ENCODE measurements at regions of chr3 and their contacts with region 1.

Region 1: DNA sequence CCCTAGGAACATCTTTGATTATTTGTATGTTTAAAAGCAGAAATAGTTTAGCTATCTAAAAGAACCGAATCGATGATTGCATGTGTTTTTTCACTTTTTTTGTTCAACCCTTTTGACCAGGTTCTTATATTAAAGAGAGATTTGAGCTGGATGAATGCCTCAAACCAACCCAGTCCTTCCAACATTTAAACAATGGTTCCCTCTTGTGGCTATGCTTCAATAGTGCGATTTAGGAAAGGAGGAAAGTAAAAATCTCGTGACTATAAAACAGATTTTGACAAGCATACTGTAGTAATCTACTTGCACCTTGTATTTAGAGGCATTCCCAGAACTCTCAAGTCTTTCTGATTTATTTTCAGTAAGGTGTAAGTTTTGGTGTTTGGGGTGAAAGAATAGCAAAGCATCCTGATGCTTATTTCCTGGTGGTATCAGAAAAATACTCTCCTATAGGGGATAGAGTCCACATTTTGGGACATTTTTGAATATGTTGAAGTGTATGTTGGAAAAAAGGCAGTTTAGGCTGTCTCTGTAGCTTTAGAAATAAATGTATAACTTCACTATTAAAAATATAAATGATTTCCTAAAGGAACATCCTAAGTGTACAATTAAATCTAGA is 159.6 kb upstream of the KCNH8 start:
- DNase-seq: no peak
- ATAC-seq: peak; percentile 60; the same call in 1 of the 2 replicates
- H3K4me3 ChIP-seq: no peak overlapping the region
- H3K27ac ChIP-seq: no peak overlapping the region
- H3K4me1 ChIP-seq: no peaks in the 10 kb centered on the region
- H3K27me3 ChIP-seq: no peaks in the 10 kb centered on the region; the same call in 1 of the 2 replicates
- CTCF ChIP-seq: peak; percentile 55; the same call in 1 of the 2 replicates

Region 2: DNA sequence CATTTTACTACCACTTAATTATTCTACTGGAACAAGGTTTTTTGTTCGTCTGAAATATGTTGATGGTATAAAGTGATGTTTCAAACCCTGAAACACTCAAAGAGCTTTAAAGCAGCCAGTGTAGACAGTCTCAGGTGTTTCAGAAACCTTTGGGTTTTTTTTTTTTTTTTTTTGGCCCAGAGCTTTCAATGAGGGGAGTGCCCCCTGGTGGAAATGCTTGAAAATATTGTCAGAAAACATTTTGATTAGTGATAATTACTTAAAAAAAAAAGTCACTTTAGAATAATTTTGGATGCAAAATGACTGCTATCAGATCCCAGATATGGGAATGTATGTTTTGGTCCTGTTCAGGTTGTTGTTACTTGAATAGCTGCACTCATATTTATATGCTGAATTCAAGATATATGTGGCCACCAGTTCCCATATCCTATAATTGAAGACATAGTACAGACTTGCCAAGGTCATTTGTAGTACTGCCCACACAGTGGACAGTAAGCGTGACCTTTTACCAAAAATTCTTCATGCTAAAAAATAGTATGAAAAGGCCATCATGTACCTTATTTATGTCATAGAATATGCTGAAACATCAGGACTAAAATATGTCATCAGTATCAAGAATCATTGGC is 599.5 kb before region 1 on chr3:
- CTCF ChIA-PET with region 1: no interaction called
- POLR2A ChIA-PET with region 1: no interaction called
- in situ Hi-C with region 1: no loop called
- intact Hi-C with region 1: loop called (anchors 5 kb)
- DNase-seq: no peak
- ATAC-seq: no peak
- H3K4me3 ChIP-seq: no peak overlapping the region
- H3K27ac ChIP-seq: no peak overlapping the region
- H3K4me1 ChIP-seq: no peaks in the 10 kb centered on the region
- H3K27me3 ChIP-seq: no peaks in the 10 kb centered on the region
- CTCF ChIP-seq: peak; percentile 63; the same call in 1 of the 2 replicates

Region 3: GRCh38 chr3:18562364-18563154 is 426.2 kb before region 1 on chr3:
- CTCF ChIA-PET with region 1: no interaction called
- POLR2A ChIA-PET with region 1: no interaction called
- in situ Hi-C with region 1: no loop called
- intact Hi-C with region 1: loop called (anchors 5 kb)
- DNase-seq: no peak
- ATAC-seq: no peak
- H3K4me3 ChIP-seq: no peak overlapping the region
- H3K27ac ChIP-seq: no peak overlapping the region
- H3K4me1 ChIP-seq: no peaks in the 10 kb centered on the region
- H3K27me3 ChIP-seq: no peaks in the 10 kb centered on the region
- CTCF ChIP-seq: no peak

Region 4: DNA sequence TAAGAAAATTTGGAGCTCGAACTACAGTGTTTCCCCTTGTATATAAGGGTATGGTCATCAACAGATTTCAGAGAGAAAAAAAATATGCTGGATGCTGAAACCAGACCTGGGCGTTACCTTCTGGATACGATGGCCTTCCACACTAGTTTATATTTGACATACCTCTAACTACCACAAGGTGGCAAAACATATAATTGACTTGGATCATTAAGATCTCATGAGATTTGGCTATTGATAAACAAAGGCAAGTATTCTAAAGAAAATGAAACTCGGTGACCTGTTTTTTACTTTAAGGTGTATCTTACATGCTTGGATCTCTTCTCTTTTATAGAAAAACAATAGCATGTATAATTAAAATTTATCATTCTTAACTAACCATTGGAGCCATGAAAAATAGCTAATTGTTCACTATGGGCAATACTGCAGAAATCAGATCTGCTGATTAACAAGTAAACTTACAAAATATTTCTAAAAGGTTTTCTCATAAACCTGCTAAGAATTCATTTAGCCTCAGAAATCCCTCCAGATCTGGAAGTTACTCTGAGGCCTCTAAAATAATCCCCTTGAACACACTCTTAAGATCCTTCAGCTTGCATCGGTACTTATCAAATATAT is 141.0 kb before region 1 on chr3:
- CTCF ChIA-PET with region 1: no interaction called
- POLR2A ChIA-PET with region 1: no interaction called
- in situ Hi-C with region 1: no loop called
- intact Hi-C with region 1: loop called (anchors 2 kb)
- DNase-seq: no peak
- ATAC-seq: no peak
- H3K4me3 ChIP-seq: no peak overlapping the region
- H3K27ac ChIP-seq: no peak overlapping the region
- H3K4me1 ChIP-seq: no peaks in the 10 kb centered on the region
- H3K27me3 ChIP-seq: no peaks in the 10 kb centered on the region
- CTCF ChIP-seq: peak; percentile 27; the same call in 1 of the 2 replicates